ENCODE measurements at regions of chr16 and their contacts with region 1.

Region 1: DNA sequence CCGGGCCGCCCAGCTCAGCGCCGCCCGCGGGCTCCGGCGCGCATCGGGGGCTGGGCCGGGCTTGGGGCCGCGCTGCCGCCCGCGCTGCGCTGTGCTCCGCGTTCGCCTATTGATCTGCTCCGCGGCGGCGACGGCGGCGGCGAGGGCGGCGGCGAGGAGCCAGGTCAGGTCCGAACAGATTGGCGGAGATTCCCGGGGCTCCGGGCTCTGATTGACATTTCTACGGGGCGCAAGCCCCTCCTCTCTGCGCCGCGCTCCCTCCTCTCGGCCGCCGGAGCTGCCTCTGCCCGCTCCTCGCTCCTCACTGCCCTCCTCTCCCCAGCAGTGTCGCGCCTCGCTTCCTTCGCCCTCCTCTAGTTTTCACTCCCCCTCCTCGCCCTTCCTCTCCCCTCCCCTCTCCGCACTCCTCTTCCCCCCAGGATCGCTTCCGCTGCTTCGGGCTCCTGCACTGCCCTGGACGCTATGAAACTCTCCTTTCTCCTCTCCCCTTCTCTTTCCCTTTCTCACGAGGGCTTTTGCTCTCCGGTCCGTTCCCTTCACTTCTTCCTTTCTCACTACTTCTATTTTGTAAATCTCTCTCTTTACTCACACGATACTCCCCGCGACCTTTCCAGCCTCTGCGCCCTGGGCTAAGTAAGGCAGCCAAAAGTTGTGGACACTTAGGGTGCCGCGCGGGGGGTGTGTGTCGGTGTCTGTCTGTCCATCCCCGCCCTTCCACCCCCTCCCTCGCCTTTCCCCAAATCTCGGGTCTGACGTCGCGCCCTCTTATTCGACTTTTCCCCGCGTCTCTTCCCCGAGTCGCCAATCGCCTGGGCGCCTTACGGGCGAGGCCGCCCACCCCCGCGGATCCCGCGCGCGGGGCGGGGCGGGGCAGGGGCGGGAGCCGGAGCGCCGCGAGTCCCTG is at the start of gene IRX3:
- DNase-seq: peak; percentile 93
- total RNA-seq, gene IRX3: 70.2 TPM

Region 2: DNA sequence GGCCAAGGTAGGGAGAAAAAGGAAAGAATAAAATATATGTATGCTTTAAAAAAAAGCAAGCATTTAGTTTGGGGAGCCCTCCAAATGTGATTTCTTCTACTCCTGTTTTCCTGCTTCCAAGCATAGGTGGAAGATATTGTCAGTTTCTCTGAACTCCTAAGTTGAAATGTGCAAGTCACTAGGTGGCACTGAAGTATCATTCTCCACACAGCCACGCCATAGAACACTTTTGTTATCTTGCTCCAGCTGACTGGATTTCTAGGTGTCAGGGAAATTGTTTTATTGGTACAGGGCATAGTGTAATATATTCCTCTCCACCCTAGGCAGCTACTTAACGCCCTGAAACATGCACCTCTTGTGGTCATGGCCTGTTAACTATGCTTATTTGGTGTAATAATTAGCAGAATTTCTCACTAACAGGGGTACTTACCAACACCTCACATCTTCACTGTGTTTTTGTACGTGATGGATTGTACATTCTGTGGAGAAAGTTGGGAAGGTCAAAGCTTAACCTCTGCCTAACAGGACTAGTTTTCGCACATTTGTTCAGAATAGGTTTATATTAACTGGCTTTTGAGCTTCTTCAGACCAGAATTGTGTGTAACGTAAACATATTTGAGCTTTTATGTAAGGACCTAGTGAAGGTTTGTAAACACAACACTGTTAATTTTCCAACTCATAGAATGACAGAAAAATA is 513.0 kb before region 1 on chr16:
- intact Hi-C with region 1: loop called (anchors 5 kb)
- DNase-seq: no peak

Region 3: GRCh38 chr16:54193665-54194333 is 92.5 kb before region 1 on chr16:
- intact Hi-C with region 1: loop called (anchors 5 kb)
- DNase-seq: peak; percentile 88

Region 4: GRCh38 chr16:54503011-54503855 is 216.9 kb after region 1 on chr16:
- intact Hi-C with region 1: loop called (anchors 5 kb)
- DNase-seq: peak; percentile 82

Region 5: DNA sequence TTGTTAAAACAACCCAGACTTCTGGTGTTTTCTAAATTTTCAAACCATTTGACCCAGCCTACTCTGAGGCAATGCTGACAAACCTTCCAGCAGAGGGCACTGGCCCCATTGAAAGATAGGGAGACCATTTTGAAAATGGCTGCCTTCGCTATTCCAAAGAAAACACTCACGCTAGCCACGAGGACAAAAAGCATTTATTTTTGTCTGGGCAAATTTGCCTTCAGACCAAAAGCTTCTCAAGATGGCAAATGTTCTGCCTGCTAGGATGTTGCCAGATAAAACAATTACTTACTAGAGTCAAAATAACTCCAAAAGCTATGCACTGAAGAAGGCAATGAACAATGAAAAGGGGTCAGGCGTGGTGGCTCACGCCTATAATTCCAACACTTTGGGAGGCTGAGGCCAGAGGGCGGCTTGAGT is 347.6 kb after region 1 on chr16:
- intact Hi-C with region 1: loop called (anchors 10 kb)
- DNase-seq: no peak

Region 6: DNA sequence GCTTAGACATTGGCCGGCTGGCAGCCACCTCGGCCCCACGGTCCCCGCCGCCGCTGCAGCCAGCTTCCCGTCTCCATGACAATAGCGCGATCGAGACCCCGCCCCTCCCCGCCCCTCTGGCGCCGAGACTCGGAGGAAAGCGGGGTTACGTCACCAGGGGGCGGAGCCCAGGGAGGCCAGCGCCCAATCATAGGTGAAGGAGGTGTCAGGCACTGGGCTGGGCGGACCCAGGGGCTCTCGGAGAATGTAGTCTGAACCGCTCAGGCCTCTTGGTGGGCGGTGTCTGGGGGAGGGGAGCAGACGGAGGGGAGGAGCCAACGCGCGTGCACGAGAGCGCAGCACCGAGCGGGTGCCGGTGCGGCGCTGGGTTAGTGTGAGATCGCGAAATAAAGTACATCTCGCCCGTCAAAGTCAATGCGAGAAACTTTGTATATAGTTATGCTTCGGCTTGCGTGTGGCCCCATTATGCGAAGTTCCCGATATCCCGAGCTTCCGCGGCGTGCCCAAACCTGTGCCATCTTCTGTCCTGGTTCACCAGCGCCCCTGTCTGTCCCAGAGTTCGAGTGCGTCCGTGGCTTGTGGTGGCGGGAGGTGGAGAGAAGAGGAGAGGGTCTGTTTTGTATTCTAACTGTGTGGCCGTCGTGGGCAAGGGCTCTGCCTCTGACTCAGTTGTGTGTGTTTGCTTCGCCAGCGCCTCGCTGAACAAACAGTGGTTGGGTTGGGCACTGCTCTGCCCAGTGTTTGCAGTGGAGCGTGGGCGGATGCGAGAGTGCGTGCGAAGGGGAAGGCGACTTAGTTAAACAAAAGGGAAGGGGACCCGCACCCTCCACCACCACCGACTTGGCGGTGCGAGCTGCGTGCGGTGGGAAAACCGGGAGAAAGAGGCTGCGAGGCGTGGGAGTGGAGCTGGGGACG is 643.0 kb after region 1 on chr16:
- intact Hi-C with region 1: loop called (anchors 2 kb)
- DNase-seq: peak; percentile 100

Region 7: DNA sequence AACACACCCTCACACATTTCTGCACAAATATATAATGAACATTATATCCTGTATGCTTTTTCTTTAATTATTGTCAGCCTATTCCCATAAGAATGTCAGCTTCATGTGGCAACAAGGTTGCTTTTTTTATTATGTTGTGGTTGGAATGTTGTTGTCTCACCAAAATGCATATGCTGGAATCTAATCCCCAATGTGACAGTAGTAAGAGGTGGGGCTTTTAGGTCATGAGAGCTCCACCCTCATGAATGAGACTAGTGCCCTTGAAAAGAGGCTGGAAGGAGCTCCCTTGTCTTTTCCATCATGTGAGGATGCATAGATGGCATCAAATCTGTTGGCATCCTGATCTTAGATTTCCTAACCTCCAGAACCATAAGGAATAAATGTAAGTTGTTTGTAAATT is 906.4 kb after region 1 on chr16:
- intact Hi-C with region 1: no loop called
- DNase-seq: no peak

Region 8: GRCh38 chr16:55370762-55371482 is 1084.6 kb after region 1 on chr16:
- intact Hi-C with region 1: loop called (anchors 10 kb)
- DNase-seq: peak; percentile 85

Measured in cardiac septum (tissue), 1 donor.